Mammary epithelial cell (primary cell): ENCODE measurements at regions of chr11 and their contacts with region 1.

Region 1: GRCh38 chr11:3834664-3835461 is 5.9 kb downstream of the RHOG start:
- DNase-seq: no peak
- H3K4me3 ChIP-seq: no peak overlapping the region
- H3K27ac ChIP-seq: no peak overlapping the region
- H3K4me1 ChIP-seq: peaks cover 32% of the 10 kb centered on the region
- H3K27me3 ChIP-seq: no peaks in the 10 kb centered on the region
- CTCF ChIP-seq: no peak

Region 2: GRCh38 chr11:3732671-3733436 is 102.0 kb before region 1 on chr11:
- CTCF ChIA-PET with region 1: no interaction called
- dilution Hi-C with region 1: no loop called
- in situ Hi-C with region 1: no loop called
- intact Hi-C with region 1: no loop called
- DNase-seq: no peak
- H3K4me3 ChIP-seq: no peak overlapping the region
- H3K27ac ChIP-seq: no peak overlapping the region
- H3K4me1 ChIP-seq: no peaks in the 10 kb centered on the region
- H3K27me3 ChIP-seq: no peaks in the 10 kb centered on the region
- CTCF ChIP-seq: no peak

Region 3: GRCh38 chr11:3753110-3753509 is 81.8 kb before region 1 on chr11:
- CTCF ChIA-PET with region 1: no interaction called
- dilution Hi-C with region 1: no loop called
- in situ Hi-C with region 1: no loop called
- intact Hi-C with region 1: no loop called
- DNase-seq: no peak
- H3K4me3 ChIP-seq: no peak overlapping the region
- H3K27ac ChIP-seq: no peak overlapping the region
- H3K4me1 ChIP-seq: peaks cover 5% of the 10 kb centered on the region
- H3K27me3 ChIP-seq: no peaks in the 10 kb centered on the region
- CTCF ChIP-seq: no peak

Region 4: DNA sequence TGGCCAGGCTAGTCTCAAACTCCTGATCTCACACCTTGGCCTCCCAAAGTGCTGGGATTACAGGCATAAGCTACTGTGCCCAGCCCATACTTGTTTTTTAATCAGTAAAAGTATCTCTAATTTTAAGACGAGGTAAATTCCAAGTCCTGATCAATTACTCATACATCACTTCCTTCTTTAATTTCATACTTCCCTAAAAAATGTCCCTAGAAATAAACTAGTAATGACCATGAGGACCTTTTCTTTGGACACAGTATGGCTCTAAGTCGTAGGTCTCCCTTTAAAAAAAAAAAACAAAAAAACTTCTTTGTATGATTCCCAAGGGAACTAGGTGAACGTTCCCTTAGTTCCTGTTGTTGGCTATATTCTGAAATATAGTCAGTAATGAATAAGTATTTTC is 67.3 kb before region 1 on chr11:
- CTCF ChIA-PET with region 1: no interaction called
- dilution Hi-C with region 1: loop called (anchors 10 kb)
- in situ Hi-C with region 1: no loop called
- intact Hi-C with region 1: no loop called
- DNase-seq: no peak
- H3K4me3 ChIP-seq: no peak overlapping the region
- H3K27ac ChIP-seq: no peak overlapping the region
- H3K4me1 ChIP-seq: no peaks in the 10 kb centered on the region
- H3K27me3 ChIP-seq: no peaks in the 10 kb centered on the region
- CTCF ChIP-seq: no peak